Endothelial cell of umbilical vein (primary cell): ENCODE measurements at regions of chr10 and their contacts with region 1.

Region 1: DNA sequence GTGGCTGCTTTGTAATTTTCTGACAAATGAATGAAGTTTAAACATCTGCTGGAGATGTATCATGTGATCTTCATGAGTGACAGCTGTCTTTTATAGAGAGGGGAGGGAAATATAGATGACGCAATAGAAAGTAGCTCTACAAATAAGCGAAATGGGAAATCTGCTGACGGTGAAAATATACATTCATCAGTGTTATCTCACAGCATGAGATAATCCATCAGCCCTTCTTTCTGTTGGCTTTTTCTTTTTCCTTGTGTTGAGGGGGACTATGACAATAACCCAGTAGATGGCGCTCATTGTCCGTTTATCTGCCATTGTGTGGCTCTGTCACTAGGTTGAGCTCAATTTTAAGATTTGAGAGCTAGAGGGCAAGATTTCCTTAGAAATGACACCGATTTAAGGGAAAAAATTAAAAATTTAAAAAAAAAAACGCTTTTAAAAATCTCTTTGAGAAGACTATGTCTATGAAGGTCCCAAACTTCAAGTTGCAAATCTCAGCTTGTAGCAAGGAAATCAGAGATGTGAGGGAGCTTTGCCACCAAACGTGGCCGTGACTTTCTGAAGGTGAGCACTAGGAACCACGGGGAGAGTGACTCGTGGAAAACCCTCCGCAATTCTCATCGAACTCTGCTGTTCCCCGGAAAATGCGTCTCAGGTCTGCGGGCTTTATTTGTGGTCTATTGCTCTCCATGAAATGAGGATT is 114.6 kb upstream of the SFMBT2 start:
- DNase-seq: peak; percentile 62
- H3K4me3 ChIP-seq: no peak overlapping the region
- H3K27ac ChIP-seq: no peak overlapping the region
- H3K4me1 ChIP-seq: no peaks in the 10 kb centered on the region
- H3K27me3 ChIP-seq: no peaks in the 10 kb centered on the region
- CTCF ChIP-seq: peak; percentile 54 to 59
- POLR2A ChIP-seq: no peak

Region 2: GRCh38 chr10:7424315-7424714 is 101.2 kb before region 1 on chr10:
- CTCF ChIA-PET with region 1: no interaction called
- POLR2A ChIA-PET with region 1: no interaction called
- dilution Hi-C with region 1: no loop called
- intact Hi-C with region 1: no loop called
- DNase-seq: no peak
- H3K4me3 ChIP-seq: no peak overlapping the region
- H3K27ac ChIP-seq: no peak overlapping the region
- H3K4me1 ChIP-seq: no peaks in the 10 kb centered on the region
- H3K27me3 ChIP-seq: peaks cover 0 to 1% of the 10 kb centered on the region in 2 experiments
- CTCF ChIP-seq: no peak
- POLR2A ChIP-seq: no peak

Region 3: DNA sequence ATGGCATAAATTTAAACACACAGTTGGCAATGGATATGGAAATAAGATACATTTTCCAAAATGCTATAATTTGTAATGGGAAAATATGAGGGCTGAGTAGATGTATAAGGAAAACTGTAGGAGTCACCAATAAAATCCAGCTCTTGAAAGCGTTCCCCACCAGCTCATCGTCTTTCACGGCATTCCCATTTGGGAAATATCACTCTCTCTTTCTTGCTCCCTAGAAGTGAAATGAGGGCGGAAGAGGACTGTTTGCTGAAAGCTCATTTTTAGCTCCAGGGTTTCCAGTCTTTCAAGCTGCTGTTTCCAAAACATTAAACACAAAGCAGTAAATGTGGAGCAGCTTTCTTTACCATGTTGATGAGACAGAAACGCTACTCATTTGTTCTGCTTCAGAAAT is 10.0 kb before region 1 on chr10:
- CTCF ChIA-PET with region 1: interaction called, 20 read pairs
- POLR2A ChIA-PET with region 1: no interaction called
- dilution Hi-C with region 1: no loop called
- intact Hi-C with region 1: no loop called
- DNase-seq: no peak
- H3K4me3 ChIP-seq: no peak overlapping the region
- H3K27ac ChIP-seq: no peak overlapping the region
- H3K4me1 ChIP-seq: no peaks in the 10 kb centered on the region
- H3K27me3 ChIP-seq: no peaks in the 10 kb centered on the region
- CTCF ChIP-seq: no peak
- POLR2A ChIP-seq: no peak

Region 4: DNA sequence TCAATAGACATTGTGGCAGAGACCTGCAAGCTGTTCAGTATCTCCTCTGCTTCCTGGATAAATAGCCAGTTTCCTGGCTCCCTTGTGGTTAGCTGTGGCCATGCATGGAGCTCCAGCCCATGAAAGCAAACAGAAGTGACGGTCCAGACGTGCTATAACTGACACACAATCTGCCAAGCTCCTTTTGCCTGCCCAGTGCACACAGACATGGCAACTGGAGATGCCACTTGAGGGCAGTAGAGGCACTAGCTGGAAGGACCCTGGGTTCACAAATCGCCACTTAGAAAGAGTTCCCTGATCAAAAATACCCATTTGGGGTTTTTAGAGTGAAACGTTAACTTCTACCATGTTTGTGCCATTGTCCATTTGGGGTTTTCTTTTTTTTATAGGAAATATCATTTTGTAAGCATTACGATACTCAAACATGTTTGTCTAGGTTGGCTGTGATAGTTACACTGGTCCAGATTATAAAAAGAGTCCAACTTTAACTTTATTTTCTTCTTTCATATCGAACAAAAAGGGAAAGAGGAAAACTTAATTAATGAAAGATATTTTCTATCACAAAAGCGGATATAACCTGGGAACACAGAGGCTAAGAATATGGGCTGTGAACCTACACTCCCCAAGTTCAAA is 231.0 kb after region 1 on chr10:
- CTCF ChIA-PET with region 1: interaction called, 11 read pairs
- POLR2A ChIA-PET with region 1: no interaction called
- dilution Hi-C with region 1: no loop called
- intact Hi-C with region 1: no loop called
- DNase-seq: peak; percentile 52
- H3K4me3 ChIP-seq: no peak overlapping the region
- H3K27ac ChIP-seq: no peak overlapping the region
- H3K4me1 ChIP-seq: no peaks in the 10 kb centered on the region
- H3K27me3 ChIP-seq: no peaks in the 10 kb centered on the region
- CTCF ChIP-seq: peak; percentile 48 to 70
- POLR2A ChIP-seq: no peak

Region 5: GRCh38 chr10:9294865-9295264 is 1769.4 kb after region 1 on chr10:
- CTCF ChIA-PET with region 1: interaction called, 31 read pairs
- POLR2A ChIA-PET with region 1: no interaction called
- dilution Hi-C with region 1: no loop called
- intact Hi-C with region 1: no loop called
- DNase-seq: no peak
- H3K4me3 ChIP-seq: no peak overlapping the region
- H3K27ac ChIP-seq: no peak overlapping the region
- H3K4me1 ChIP-seq: no peaks in the 10 kb centered on the region
- H3K27me3 ChIP-seq: peaks cover 0 to under 1% of the 10 kb centered on the region in 2 experiments
- CTCF ChIP-seq: no peak
- POLR2A ChIP-seq: no peak

Region 6: DNA sequence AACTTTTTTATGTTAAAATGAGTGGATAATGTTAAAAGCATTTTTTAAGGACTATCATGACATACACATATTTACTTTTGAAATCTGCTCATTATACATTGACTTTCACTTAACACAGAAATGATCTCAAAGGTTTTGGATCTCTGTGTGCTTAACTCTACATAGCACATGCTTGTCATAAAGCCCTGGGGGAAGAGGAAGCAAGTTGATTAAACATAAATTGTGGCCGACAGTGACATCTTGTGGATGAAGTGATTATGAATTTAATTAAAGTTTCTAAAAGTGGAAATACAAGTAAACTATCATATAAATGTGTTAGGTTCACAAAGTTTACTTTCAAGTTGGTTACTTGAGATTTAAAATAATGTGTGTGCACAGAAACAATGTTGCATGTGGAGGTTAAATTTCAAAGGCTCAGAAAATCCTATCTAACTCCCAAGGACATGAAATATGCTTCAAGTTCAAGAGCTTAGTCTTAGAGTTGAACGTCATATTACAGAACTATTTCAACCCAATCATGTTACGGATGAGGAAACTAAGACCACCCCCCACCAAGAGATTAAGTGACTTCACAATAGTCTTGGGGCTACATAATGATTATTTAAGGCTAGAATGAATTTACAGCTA is 1776.8 kb after region 1 on chr10:
- CTCF ChIA-PET with region 1: interaction called, 128 read pairs
- POLR2A ChIA-PET with region 1: no interaction called
- dilution Hi-C with region 1: no loop called
- intact Hi-C with region 1: loop called (anchors 1 kb)
- DNase-seq: peak; percentile 79
- H3K4me3 ChIP-seq: no peak overlapping the region
- H3K27ac ChIP-seq: no peak overlapping the region
- H3K4me1 ChIP-seq: no peaks in the 10 kb centered on the region
- H3K27me3 ChIP-seq: peaks cover 0 to 2% of the 10 kb centered on the region in 2 experiments
- CTCF ChIP-seq: peak in 1 of 2 donors; percentile 8
- POLR2A ChIP-seq: no peak

Region 7: DNA sequence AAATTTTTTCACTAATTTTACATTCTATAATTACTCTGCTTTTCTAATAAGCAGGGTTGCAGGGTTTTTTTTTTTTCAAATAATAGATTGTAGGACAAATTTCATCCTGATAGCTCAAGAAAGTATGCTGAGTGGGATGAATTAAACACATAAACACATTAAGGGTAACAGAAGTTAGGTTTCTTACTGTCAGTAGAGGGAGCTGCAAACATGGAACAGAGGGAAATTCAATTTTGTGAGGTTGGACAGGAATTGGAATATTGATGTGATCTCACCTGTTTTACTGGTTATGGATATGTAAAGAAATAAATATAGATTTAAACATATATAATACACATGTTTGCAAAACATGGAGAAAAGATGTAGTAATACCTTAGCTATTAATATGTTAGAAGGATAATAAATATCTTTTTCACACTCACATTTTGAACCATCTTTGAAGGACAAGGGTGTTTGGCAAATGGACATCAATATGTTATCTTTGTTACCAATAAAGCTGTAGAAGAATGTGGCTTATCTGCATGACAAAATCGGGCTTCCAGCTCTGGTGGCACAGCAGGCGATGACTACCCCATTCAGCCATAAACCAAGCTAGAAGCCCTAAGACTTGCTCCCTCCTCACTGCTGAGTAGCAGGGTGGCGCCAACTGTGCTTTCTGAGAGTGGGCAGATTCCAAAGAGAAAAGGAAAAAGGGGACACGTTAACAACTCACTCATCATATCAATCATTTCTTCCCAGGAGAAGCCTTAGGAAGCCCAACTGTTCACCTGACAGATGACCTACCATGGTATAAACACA is 1786.4 kb after region 1 on chr10:
- CTCF ChIA-PET with region 1: interaction called, 14 read pairs
- POLR2A ChIA-PET with region 1: no interaction called
- dilution Hi-C with region 1: no loop called
- intact Hi-C with region 1: no loop called
- DNase-seq: no peak
- H3K4me3 ChIP-seq: no peak overlapping the region
- H3K27ac ChIP-seq: no peak overlapping the region
- H3K4me1 ChIP-seq: no peaks in the 10 kb centered on the region
- H3K27me3 ChIP-seq: peaks cover 0 to 7% of the 10 kb centered on the region in 2 experiments
- CTCF ChIP-seq: peak; percentile 5 to 12
- POLR2A ChIP-seq: no peak